CD4-positive, alpha-beta T cell (primary cell): ENCODE measurements at regions of chr19 and their contacts with region 1.

Region 1: DNA sequence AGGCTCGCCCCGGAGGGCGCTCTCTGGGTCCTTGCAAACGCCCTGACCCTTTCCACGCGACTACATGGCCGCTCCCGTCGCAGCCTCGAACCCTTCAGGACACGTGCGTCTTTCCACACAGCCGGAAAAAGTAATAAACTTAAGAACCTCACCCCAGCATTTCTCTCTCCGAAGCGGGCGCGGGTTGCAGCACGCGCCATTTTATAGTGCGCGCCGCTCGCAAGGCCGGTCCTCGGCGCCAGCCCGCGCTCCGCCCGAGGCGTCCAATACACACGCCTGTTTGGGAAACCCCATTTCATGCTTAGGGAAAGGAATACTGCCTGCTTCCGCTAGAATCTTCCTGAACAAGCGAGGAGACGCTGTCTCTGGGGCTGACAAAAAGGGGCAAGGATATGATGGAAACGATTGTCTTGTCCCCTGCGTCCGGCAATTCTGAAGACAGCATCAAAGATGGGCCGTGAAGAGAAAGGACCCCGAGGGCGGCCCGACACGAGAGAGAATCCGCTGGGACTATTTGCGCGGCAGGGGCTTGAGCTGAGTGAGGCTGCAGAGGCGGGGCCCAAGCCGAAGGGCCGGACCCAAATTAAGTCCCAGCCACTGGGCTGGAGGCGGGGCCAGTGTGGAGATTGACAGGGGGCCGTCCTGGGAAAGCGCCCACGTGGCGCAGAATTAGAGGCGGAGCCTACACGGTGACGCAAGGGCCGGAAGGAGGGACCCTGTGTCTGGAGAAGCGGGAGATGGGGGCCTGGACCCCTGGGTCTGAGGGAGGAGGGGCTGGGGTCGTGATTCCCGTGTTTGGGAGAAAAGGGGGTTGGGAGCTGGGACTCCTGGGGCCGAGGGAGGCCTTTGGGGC is 14.4 kb downstream of the ACP4 start:
- DNase-seq: peak; percentile 94 to 99 (median 96)
- ATAC-seq: peak; percentile 94
- H3K4me3 ChIP-seq: peak overlapping the region; percentile 91
- H3K4me3 Mint-ChIP-seq: peak overlapping the region; percentile 99
- H3K27ac ChIP-seq: peak overlapping the region; percentile 99 to 100
- H3K27ac Mint-ChIP-seq: peak overlapping the region; percentile 97
- H3K4me1 ChIP-seq: peaks cover 31% of the 10 kb centered on the region
- H3K4me1 Mint-ChIP-seq: peaks cover 38% of the 10 kb centered on the region
- H3K27me3 ChIP-seq: no peaks in the 10 kb centered on the region
- H3K27me3 Mint-ChIP-seq: no peaks in the 10 kb centered on the region
- CTCF ChIP-seq: no peak

Region 2: GRCh38 chr19:49085020-49085867 is 1719.4 kb before region 1 on chr19 and contains the start of gene SNRNP70:
- CTCF ChIA-PET with region 1: no interaction called
- POLR2A ChIA-PET with region 1: no interaction called
- intact Hi-C with region 1: loop called in 1 of 2 experiments (anchors 10 kb)
- DNase-seq: peak; percentile 96 to 100 (median 99)
- ATAC-seq: peak; percentile 92
- H3K4me3 ChIP-seq: peak within 1 kb of the TSS; percentile 94
- H3K4me3 Mint-ChIP-seq: peak within 1 kb of the TSS; percentile 86
- H3K27ac ChIP-seq: peak within 1 kb of the TSS; percentile 68 to 75
- H3K27ac Mint-ChIP-seq: peak within 1 kb of the TSS; percentile 87
- H3K4me1 ChIP-seq: peaks cover 45% of the 10 kb centered on the region
- H3K4me1 Mint-ChIP-seq: peaks cover 36% of the 10 kb centered on the region
- H3K27me3 ChIP-seq: no peaks in the 10 kb centered on the region
- H3K27me3 Mint-ChIP-seq: peaks cover 5% of the 10 kb centered on the region
- CTCF ChIP-seq: no peak
- total RNA-seq, gene SNRNP70: 375 to 397 TPM

Region 3: GRCh38 chr19:50431343-50432220 is 373.1 kb before region 1 on chr19:
- CTCF ChIA-PET with region 1: no interaction called
- POLR2A ChIA-PET with region 1: no interaction called
- intact Hi-C with region 1: loop called in 1 of 2 experiments (anchors 5 kb)
- DNase-seq: peak; percentile 78 to 94 (median 86)
- ATAC-seq: peak; percentile 90
- H3K4me3 ChIP-seq: peak overlapping the region; percentile 68
- H3K4me3 Mint-ChIP-seq: peak overlapping the region; percentile 92
- H3K27ac ChIP-seq: peak overlapping the region; percentile 37 to 58
- H3K27ac Mint-ChIP-seq: peak overlapping the region; percentile 76
- H3K4me1 ChIP-seq: peaks cover 28% of the 10 kb centered on the region
- H3K4me1 Mint-ChIP-seq: peaks cover 19% of the 10 kb centered on the region
- H3K27me3 ChIP-seq: peaks cover 6 to 19% of the 10 kb centered on the region in 2 experiments
- H3K27me3 Mint-ChIP-seq: peaks cover 28% of the 10 kb centered on the region
- CTCF ChIP-seq: no peak

Region 4: GRCh38 chr19:50724522-50725217 is 80.0 kb before region 1 on chr19:
- CTCF ChIA-PET with region 1: interaction called, 3 read pairs
- POLR2A ChIA-PET with region 1: interaction called, 20 read pairs
- intact Hi-C with region 1: loop called in 1 of 2 experiments (anchors 5 kb)
- DNase-seq: peak; percentile 75 to 97 (median 88)
- ATAC-seq: peak; percentile 84
- H3K4me3 ChIP-seq: peak overlapping the region; percentile 54
- H3K4me3 Mint-ChIP-seq: peak overlapping the region; percentile 87
- H3K27ac ChIP-seq: peak overlapping the region in 1 of 2 donors; percentile 41
- H3K27ac Mint-ChIP-seq: peak overlapping the region; percentile 70
- H3K4me1 ChIP-seq: peaks cover 34% of the 10 kb centered on the region
- H3K4me1 Mint-ChIP-seq: peaks cover 36% of the 10 kb centered on the region
- H3K27me3 ChIP-seq: peaks cover 59 to 66% of the 10 kb centered on the region in 2 experiments
- H3K27me3 Mint-ChIP-seq: peaks cover 52% of the 10 kb centered on the region
- CTCF ChIP-seq: peak; percentile 50

Region 5: DNA sequence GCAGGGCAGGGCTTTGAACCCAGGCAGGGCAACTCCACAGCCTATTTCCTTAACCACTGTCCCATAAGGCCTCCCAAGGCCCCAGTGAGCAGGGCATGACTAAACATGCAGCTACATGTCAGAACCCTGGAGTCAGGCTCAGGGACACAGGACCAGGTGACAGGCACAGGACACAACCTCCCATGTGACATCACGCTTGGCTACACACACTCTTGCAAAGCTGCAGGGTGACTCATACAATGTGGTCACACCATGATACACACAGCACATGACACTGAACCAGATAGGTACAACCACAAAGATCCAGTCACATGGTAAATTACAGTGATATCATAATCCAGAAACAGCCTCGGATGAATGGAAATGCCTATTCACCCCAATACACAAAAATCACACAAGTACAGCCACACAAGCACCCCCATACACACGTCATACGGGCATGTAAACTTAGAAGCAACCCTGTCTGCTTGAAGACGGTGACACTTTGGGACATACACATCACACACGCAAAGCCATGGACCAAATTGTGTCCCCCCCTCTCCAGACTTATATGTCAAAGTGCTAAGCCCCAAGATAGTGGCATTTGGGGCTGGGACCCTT is 92.0 kb after region 1 on chr19:
- CTCF ChIA-PET with region 1: no interaction called
- POLR2A ChIA-PET with region 1: no interaction called
- intact Hi-C with region 1: no loop called
- DNase-seq: no peak
- ATAC-seq: no peak
- H3K4me3 ChIP-seq: no peak overlapping the region
- H3K4me3 Mint-ChIP-seq: no peak overlapping the region
- H3K27ac ChIP-seq: no peak overlapping the region
- H3K27ac Mint-ChIP-seq: no peak overlapping the region
- H3K4me1 ChIP-seq: no peaks in the 10 kb centered on the region
- H3K4me1 Mint-ChIP-seq: no peaks in the 10 kb centered on the region
- H3K27me3 ChIP-seq: peaks cover 2 to 10% of the 10 kb centered on the region in 2 experiments
- H3K27me3 Mint-ChIP-seq: peaks cover 48% of the 10 kb centered on the region
- CTCF ChIP-seq: no peak

Region 6: DNA sequence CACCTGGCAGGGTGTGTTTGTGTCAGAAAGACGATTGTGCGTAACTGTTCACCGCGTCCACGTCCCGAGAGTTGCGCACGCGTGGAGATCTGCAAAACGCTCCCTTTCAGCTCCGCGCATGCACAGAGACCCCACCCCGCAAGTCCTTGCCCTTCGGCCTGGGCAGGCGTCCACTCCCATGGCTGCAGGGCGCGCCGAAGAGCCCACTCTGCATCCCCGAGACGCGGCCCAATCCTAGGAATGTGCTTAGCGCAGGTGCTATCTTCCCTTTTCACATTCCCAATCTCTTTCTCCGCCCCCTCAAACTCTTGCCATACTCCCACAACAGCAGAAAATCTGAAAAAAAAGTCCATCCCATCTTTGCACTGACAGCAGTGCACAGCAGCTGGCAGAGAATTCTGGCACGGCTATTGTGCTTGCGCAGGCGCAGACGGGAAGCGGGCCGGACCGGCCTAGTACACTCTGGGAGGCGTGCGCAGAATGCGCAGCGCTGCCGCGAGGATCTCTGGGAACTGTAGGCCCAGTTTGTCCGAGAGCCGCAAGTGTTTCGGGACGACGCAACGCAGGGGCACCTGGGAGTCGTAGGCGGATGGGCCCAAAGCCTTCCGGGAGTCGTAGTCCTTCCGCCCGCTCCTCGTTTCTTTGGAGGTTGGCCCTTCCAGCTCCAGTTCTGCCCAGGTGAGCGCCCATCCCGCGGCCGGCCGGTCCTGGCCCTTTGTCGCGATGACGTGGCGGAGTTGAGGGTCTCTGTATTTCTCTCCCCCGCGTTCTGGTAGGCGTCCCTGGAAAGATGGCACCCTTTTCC is 789.5 kb after region 1 on chr19:
- CTCF ChIA-PET with region 1: no interaction called
- POLR2A ChIA-PET with region 1: no interaction called
- intact Hi-C with region 1: loop called in 1 of 2 experiments (anchors 5 kb)
- DNase-seq: peak; percentile 88 to 99 (median 95)
- ATAC-seq: peak; percentile 100
- H3K4me3 ChIP-seq: peak overlapping the region; percentile 80
- H3K4me3 Mint-ChIP-seq: peak overlapping the region; percentile 94
- H3K27ac ChIP-seq: peak overlapping the region in 1 of 2 donors; percentile 42
- H3K27ac Mint-ChIP-seq: peak overlapping the region; percentile 71
- H3K4me1 ChIP-seq: peaks cover 21% of the 10 kb centered on the region
- H3K4me1 Mint-ChIP-seq: peaks cover 29% of the 10 kb centered on the region
- H3K27me3 ChIP-seq: peaks cover 7 to 8% of the 10 kb centered on the region in 2 experiments
- H3K27me3 Mint-ChIP-seq: peaks cover 31% of the 10 kb centered on the region
- CTCF ChIP-seq: no peak